Left cardiac atrium (tissue), 4 donors: ENCODE measurements at regions of chr17 and their contacts with region 1.

Region 1: GRCh38 chr17:7426896-7427489 is 1.6 kb downstream of the SPEM2 start:
- DNase-seq: no peak
- ATAC-seq: peak in 1 of 2 donors; percentile 18

Region 2: GRCh38 chr17:7367083-7367482 is 59.9 kb before region 1 on chr17:
- intact Hi-C with region 1: loop called in 1 of 2 experiments (anchors 5 kb)
- DNase-seq: no peak
- ATAC-seq: no peak

Region 3: GRCh38 chr17:7394452-7395191 is 32.4 kb before region 1 on chr17 and contains the start of gene PLSCR3:
- intact Hi-C with region 1: no loop called
- DNase-seq: peak; percentile 92
- ATAC-seq: peak; percentile 95
- total RNA-seq, gene PLSCR3: 22.4 to 29.0 TPM